MCF 10A (cell line): ENCODE measurements at regions of chr1 and their contacts with region 1.

Region 1: DNA sequence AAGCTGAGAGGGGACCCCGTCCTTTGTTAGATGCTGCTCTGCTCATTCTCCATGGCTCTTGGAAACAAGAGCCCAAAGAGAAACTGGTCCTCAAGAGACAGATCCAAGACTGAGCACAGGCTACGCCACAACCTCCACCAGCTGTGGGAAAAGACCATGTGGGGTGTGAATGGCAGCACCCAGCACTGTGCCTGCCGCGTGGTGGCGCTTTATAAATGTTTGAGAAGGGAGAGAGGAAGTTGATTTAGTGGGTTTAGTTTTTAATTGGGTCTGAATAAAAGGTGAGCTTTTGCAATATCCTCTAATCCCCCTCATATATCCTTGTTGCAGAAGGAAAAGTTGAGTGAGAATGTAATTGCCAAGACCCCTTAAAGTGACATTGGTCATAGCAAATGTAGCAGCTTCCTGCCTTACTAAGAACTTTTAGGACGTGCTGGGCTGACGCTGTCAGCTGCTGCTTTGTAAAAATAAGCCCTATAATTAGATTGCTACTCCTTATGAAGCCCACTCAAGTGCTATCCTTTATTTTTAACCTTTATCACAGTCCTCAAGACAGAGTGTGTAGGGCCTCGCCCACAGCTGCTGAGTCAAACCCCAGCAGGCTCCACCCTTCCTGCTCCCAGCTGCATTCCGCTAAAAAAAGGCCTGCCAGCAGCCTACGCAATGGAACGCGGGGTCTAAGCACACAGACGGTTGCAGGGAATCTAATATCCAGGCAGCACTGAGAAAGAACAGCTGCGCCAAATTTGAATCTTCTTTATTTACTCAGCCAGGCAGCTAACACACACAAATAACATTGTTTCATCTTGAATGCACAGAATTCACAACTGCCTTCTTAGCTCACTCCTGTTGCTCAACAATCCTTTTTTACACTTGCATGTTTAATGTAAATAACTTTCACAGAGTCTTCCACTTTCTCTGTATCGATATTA is 47.4 kb upstream of the PRDX6 start:
- DNase-seq: peak; percentile 91
- H3K4me3 Mint-ChIP-seq: peak overlapping the region; percentile 60
- H3K27ac Mint-ChIP-seq: peak overlapping the region; percentile 93
- H3K4me1 Mint-ChIP-seq: peaks cover 43% of the 10 kb centered on the region
- H3K27me3 Mint-ChIP-seq: no peaks in the 10 kb centered on the region
- CTCF ChIP-seq: peak; percentile 39

Region 2: DNA sequence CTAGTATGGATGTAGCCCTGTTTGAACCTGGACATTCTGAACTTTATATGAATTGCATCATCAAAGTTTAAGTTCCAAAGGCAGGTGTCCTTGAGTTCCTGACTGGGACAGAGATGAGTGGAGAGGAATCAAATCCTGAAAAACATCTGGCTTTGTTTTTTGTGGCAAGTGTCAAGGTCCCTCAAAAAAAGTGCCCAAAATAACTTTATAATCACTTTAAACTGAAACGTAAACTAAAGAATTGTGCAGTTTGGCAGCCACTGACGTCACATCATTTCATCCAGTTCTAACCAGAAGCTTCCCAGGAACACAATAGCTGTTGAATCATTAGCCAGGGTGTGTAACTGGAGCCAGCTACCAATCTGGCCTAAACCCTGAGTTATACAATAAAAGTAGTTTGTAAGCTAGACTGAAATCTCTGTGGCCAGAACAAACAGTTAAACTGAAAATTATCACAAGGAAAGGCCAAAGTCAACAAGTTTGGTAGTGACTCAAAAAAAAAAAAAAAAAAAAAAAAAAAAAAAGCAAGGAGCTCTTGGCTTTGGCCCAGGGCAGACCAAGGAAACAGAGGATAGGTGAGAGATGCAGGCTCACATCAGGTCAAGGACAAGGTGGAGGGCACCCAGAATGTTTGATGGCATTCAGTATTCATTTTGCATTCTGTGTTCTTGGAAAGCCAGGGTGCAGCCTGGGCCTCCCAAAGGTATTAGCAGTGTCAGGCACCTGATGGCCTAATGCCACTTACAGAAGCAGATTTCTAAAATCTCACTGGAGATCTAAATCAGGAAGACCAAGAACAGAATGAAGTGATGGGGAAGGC is 453.3 kb before region 1 on chr1:
- CTCF ChIA-PET with region 1: no interaction called
- POLR2A ChIA-PET with region 1: no interaction called
- intact Hi-C with region 1: no loop called
- DNase-seq: peak; percentile 98
- H3K4me3 Mint-ChIP-seq: no peak overlapping the region
- H3K27ac Mint-ChIP-seq: peak overlapping the region; percentile 88
- H3K4me1 Mint-ChIP-seq: peaks cover 47% of the 10 kb centered on the region
- H3K27me3 Mint-ChIP-seq: no peaks in the 10 kb centered on the region
- CTCF ChIP-seq: no peak

Region 3: GRCh38 chr1:173112129-173112528 is 317.6 kb before region 1 on chr1:
- CTCF ChIA-PET with region 1: no interaction called
- POLR2A ChIA-PET with region 1: no interaction called
- intact Hi-C with region 1: no loop called
- DNase-seq: peak; percentile 34
- H3K4me3 Mint-ChIP-seq: no peak overlapping the region
- H3K27ac Mint-ChIP-seq: no peak overlapping the region
- H3K4me1 Mint-ChIP-seq: peaks cover 14% of the 10 kb centered on the region
- H3K27me3 Mint-ChIP-seq: no peaks in the 10 kb centered on the region
- CTCF ChIP-seq: no peak

Region 4: GRCh38 chr1:173451981-173452380 is 22.2 kb after region 1 on chr1:
- CTCF ChIA-PET with region 1: interaction called, 6 read pairs
- POLR2A ChIA-PET with region 1: interaction called, 14 read pairs
- intact Hi-C with region 1: no loop called
- DNase-seq: peak; percentile 91
- H3K4me3 Mint-ChIP-seq: no peak overlapping the region
- H3K27ac Mint-ChIP-seq: peak overlapping the region; percentile 14
- H3K4me1 Mint-ChIP-seq: peaks cover 23% of the 10 kb centered on the region
- H3K27me3 Mint-ChIP-seq: no peaks in the 10 kb centered on the region
- CTCF ChIP-seq: no peak

Region 5: DNA sequence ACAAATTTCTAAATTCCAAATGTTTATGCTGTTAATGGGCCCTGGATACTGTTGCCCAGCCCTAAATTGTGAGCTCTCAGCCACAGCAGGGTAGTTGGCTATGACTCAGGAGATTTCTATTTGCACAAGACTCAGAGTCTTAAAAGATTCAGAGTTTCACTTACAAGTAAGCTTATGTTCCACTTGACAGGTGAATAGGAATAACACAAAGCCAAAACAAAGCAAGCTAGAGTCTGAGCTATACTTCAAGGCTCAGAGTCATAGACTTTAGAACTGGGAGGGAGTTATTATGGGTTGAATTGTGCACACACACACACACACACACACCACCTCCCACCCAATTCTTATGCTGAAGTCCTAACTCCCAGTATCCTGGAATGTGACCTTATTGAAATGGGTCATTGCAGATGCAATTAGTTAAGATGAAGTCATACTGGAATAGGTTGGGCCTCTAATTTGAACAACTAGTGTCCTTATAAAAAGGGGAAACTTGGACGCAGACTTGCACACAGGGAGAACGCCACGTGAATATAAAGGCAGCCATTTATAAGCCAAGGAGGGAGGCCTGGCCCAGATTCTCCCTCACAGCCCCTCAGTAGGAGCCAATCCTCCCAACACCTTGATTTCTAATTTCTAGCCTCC is 77.6 kb after region 1 on chr1:
- CTCF ChIA-PET with region 1: interaction called, 26 read pairs
- POLR2A ChIA-PET with region 1: interaction called, 6 read pairs
- intact Hi-C with region 1: loop called (anchors 2 kb)
- DNase-seq: peak; percentile 72
- H3K4me3 Mint-ChIP-seq: peak overlapping the region; percentile 24
- H3K27ac Mint-ChIP-seq: peak overlapping the region; percentile 76
- H3K4me1 Mint-ChIP-seq: peaks cover 26% of the 10 kb centered on the region
- H3K27me3 Mint-ChIP-seq: no peaks in the 10 kb centered on the region
- CTCF ChIP-seq: no peak

Region 6: GRCh38 chr1:173570370-173571007 is 140.8 kb after region 1 on chr1:
- CTCF ChIA-PET with region 1: no interaction called
- POLR2A ChIA-PET with region 1: no interaction called
- intact Hi-C with region 1: no loop called
- DNase-seq: no peak
- H3K4me3 Mint-ChIP-seq: no peak overlapping the region
- H3K27ac Mint-ChIP-seq: no peak overlapping the region
- H3K4me1 Mint-ChIP-seq: peaks cover 12% of the 10 kb centered on the region
- H3K27me3 Mint-ChIP-seq: no peaks in the 10 kb centered on the region
- CTCF ChIP-seq: no peak

Region 7: GRCh38 chr1:173824331-173825081 is 394.8 kb after region 1 on chr1 and contains the starts of genes CENPL and DARS2:
- CTCF ChIA-PET with region 1: interaction called, 50 read pairs
- POLR2A ChIA-PET with region 1: interaction called, 49 read pairs
- intact Hi-C with region 1: loop called (anchors 1 kb)
- DNase-seq: peak; percentile 100
- H3K4me3 Mint-ChIP-seq: peak within 1 kb of the TSS; percentile 97
- H3K27ac Mint-ChIP-seq: peak within 1 kb of the TSS; percentile 98
- H3K4me1 Mint-ChIP-seq: peaks cover 39% of the 10 kb centered on the region
- H3K27me3 Mint-ChIP-seq: no peaks in the 10 kb centered on the region
- CTCF ChIP-seq: no peak
- total RNA-seq, gene CENPL: 14.1 and 24.5 TPM in 2 replicates
- total RNA-seq, gene DARS2: 34.6 and 40.4 TPM in 2 replicates